ENCODE measurements at regions of chr11 and their contacts with region 1.

Region 1: GRCh38 chr11:46121724-46122477 is 647 bp upstream of the PHF21A start:
- DNase-seq: no peak
- H3K4me3 ChIP-seq: peak overlapping the region; percentile 83 to 94 (median 90)
- H3K27ac ChIP-seq: peak overlapping the region; percentile 90 to 95 (median 94)
- H3K4me1 ChIP-seq: peaks cover 29 to 35% (median 34%) of the 10 kb centered on the region in 4 donors
- H3K27me3 ChIP-seq: no peaks in the 10 kb centered on the region
- CTCF ChIP-seq: no peak
- EP300 ChIP-seq: no peak
- POLR2A ChIP-seq: no peak

Region 2: GRCh38 chr11:46006418-46007070 is 115.4 kb before region 1 on chr11:
- intact Hi-C with region 1: loop called (anchors 10 kb)
- DNase-seq: no peak
- H3K4me3 ChIP-seq: no peak overlapping the region
- H3K27ac ChIP-seq: no peak overlapping the region
- H3K4me1 ChIP-seq: peaks cover 5 to 53% (median 40%) of the 10 kb centered on the region in 4 donors
- H3K27me3 ChIP-seq: no peaks in the 10 kb centered on the region
- CTCF ChIP-seq: peak; percentile 66 to 78 (median 69)
- EP300 ChIP-seq: no peak
- POLR2A ChIP-seq: no peak

Region 3: DNA sequence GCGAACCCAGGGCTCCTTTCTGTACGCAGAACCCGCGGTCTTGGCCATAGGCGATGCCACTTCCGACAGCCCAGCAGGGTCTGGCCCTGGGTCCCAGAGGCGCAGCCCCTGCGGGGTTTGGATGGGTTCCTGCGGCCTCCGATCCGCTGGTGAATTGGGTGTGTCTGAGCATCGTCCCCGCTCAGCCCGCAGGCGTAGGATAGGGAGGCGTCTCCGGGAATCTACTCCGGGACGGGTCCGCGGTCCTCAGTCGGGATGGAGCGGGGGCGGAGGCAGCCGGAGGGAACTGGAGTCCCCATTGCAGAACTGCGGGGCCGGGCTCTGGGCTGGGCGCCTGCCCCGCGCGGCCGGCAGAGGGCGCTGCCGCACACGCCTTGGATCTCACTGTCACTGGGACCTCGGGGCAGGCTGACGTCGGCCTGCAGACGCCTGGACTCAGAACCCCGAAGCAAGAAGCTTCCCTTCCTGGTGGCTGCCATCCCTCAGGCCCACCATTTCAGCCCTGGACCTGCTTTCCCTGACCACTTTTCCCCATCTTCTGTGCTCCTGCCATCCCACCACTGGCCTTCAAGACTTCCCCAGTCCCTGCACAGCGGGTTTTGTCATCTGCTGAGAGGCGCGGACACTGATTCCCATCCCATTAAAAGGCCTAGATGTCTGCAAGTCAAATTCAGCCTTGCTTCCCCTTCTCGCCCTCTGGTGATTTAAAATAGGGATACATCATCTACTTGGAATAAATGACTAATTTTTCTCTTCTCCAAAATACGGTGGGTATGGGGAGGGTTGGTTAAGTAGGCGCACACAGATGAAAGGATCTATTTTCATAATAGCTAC is 117.3 kb after region 1 on chr11:
- intact Hi-C with region 1: loop called (anchors 2 kb)
- DNase-seq: peak; percentile 95
- H3K4me3 ChIP-seq: peak overlapping the region; percentile 61 to 70 (median 64)
- H3K27ac ChIP-seq: peak overlapping the region; percentile 81 to 94 (median 88)
- H3K4me1 ChIP-seq: peaks cover 33 to 53% (median 47%) of the 10 kb centered on the region in 4 donors
- H3K27me3 ChIP-seq: no peaks in the 10 kb centered on the region
- CTCF ChIP-seq: peak in 2 of 3 experiments; percentile 98 to 99
- EP300 ChIP-seq: no peak
- POLR2A ChIP-seq: peak; percentile 11

Region 4: GRCh38 chr11:46308631-46309419 is 186.9 kb after region 1 on chr11:
- intact Hi-C with region 1: loop called (anchors 10 kb)
- DNase-seq: peak; percentile 95
- H3K4me3 ChIP-seq: peak overlapping the region in 1 of 4 donors; percentile 22
- H3K27ac ChIP-seq: no peak overlapping the region
- H3K4me1 ChIP-seq: peaks cover 4 to 10% (median 8%) of the 10 kb centered on the region in 4 donors
- H3K27me3 ChIP-seq: no peaks in the 10 kb centered on the region
- CTCF ChIP-seq: peak; percentile 86 to 89 (median 87)
- EP300 ChIP-seq: no peak
- POLR2A ChIP-seq: no peak